ENCODE measurements at regions of chr17 and their contacts with region 1.

Region 1: GRCh38 chr17:37671824-37672547 is 28.7 kb upstream of the DDX52 start:
- DNase-seq: peak in 1 of 2 experiments; percentile 67
- H3K4me3 ChIP-seq: no peak overlapping the region
- H3K4me3 Mint-ChIP-seq: no peak overlapping the region
- H3K27ac Mint-ChIP-seq: peak overlapping the region; percentile 96
- H3K4me1 ChIP-seq: peaks cover 76% of the 10 kb centered on the region
- H3K4me1 Mint-ChIP-seq: peaks cover 46% of the 10 kb centered on the region
- H3K27me3 ChIP-seq: no peaks in the 10 kb centered on the region
- H3K27me3 Mint-ChIP-seq: no peaks in the 10 kb centered on the region
- CTCF ChIP-seq: no peak

Region 2: GRCh38 chr17:36869856-36870719 is 801.9 kb before region 1 on chr17:
- CTCF ChIA-PET with region 1: no interaction called
- POLR2A ChIA-PET with region 1: interaction called, 10 read pairs
- intact Hi-C with region 1: no loop called
- DNase-seq: no peak
- H3K4me3 ChIP-seq: no peak overlapping the region
- H3K4me3 Mint-ChIP-seq: no peak overlapping the region
- H3K27ac Mint-ChIP-seq: no peak overlapping the region
- H3K4me1 ChIP-seq: no peaks in the 10 kb centered on the region
- H3K4me1 Mint-ChIP-seq: no peaks in the 10 kb centered on the region
- H3K27me3 ChIP-seq: no peaks in the 10 kb centered on the region
- H3K27me3 Mint-ChIP-seq: peaks cover 5% of the 10 kb centered on the region
- CTCF ChIP-seq: no peak

Region 3: DNA sequence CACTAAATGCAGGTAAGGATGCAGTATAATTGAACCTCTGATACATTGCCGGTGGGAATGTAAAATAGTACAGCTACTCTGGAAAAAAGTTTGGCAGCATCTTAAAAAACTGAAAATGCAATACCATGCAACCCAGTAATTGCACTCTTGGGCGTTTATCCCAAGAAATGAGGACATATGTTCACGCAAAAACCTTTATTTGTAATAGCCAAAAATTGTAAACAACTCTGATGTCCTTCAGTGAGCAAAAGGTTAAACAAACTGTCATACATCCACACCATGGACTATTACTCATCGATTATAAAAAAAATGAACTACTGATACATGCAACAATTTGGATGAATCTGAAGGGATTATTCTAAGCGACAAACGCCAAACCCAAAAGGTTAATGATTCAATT is 79.7 kb before region 1 on chr17:
- CTCF ChIA-PET with region 1: no interaction called
- POLR2A ChIA-PET with region 1: no interaction called
- intact Hi-C with region 1: no loop called
- DNase-seq: no peak
- H3K4me3 ChIP-seq: no peak overlapping the region
- H3K4me3 Mint-ChIP-seq: no peak overlapping the region
- H3K27ac Mint-ChIP-seq: no peak overlapping the region
- H3K4me1 ChIP-seq: no peaks in the 10 kb centered on the region
- H3K4me1 Mint-ChIP-seq: peaks cover 5% of the 10 kb centered on the region
- H3K27me3 ChIP-seq: no peaks in the 10 kb centered on the region
- H3K27me3 Mint-ChIP-seq: no peaks in the 10 kb centered on the region
- CTCF ChIP-seq: no peak

Region 4: GRCh38 chr17:37661400-37662014 is 10.5 kb before region 1 on chr17:
- CTCF ChIA-PET with region 1: interaction called, 10 read pairs
- POLR2A ChIA-PET with region 1: interaction called, 8 read pairs
- intact Hi-C with region 1: no loop called
- DNase-seq: no peak
- H3K4me3 ChIP-seq: no peak overlapping the region
- H3K4me3 Mint-ChIP-seq: no peak overlapping the region
- H3K27ac Mint-ChIP-seq: no peak overlapping the region
- H3K4me1 ChIP-seq: peaks cover 5% of the 10 kb centered on the region; the same call in 1 of the 2 replicates
- H3K4me1 Mint-ChIP-seq: peaks cover 20% of the 10 kb centered on the region
- H3K27me3 ChIP-seq: no peaks in the 10 kb centered on the region
- H3K27me3 Mint-ChIP-seq: no peaks in the 10 kb centered on the region
- CTCF ChIP-seq: peak in 1 of 2 experiments; percentile 26

Region 5: GRCh38 chr17:37689317-37689716 is 17.3 kb after region 1 on chr17:
- CTCF ChIA-PET with region 1: interaction called, 6 read pairs
- POLR2A ChIA-PET with region 1: interaction called, 8 read pairs
- intact Hi-C with region 1: loop called (anchors 1 kb)
- DNase-seq: peak; percentile 84 to 90
- H3K4me3 ChIP-seq: no peak overlapping the region
- H3K4me3 Mint-ChIP-seq: peak overlapping the region; percentile 47
- H3K27ac Mint-ChIP-seq: peak overlapping the region; percentile 75
- H3K4me1 ChIP-seq: peaks cover 71% of the 10 kb centered on the region
- H3K4me1 Mint-ChIP-seq: peaks cover 57% of the 10 kb centered on the region
- H3K27me3 ChIP-seq: no peaks in the 10 kb centered on the region
- H3K27me3 Mint-ChIP-seq: no peaks in the 10 kb centered on the region
- CTCF ChIP-seq: no peak

Region 6: GRCh38 chr17:37737081-37737480 is 65.1 kb after region 1 on chr17:
- CTCF ChIA-PET with region 1: no interaction called
- POLR2A ChIA-PET with region 1: interaction called, 3 read pairs
- intact Hi-C with region 1: loop called (anchors 10 kb)
- DNase-seq: no peak
- H3K4me3 ChIP-seq: no peak overlapping the region
- H3K4me3 Mint-ChIP-seq: no peak overlapping the region
- H3K27ac Mint-ChIP-seq: peak overlapping the region; percentile 19
- H3K4me1 ChIP-seq: peaks cover 23% of the 10 kb centered on the region
- H3K4me1 Mint-ChIP-seq: peaks cover 28% of the 10 kb centered on the region
- H3K27me3 ChIP-seq: no peaks in the 10 kb centered on the region
- H3K27me3 Mint-ChIP-seq: no peaks in the 10 kb centered on the region
- CTCF ChIP-seq: peak; percentile 15 to 19

Measured in Caco-2 (cell line).